ENCODE measurements at regions of chr9 and their contacts with region 1.

Region 1: DNA sequence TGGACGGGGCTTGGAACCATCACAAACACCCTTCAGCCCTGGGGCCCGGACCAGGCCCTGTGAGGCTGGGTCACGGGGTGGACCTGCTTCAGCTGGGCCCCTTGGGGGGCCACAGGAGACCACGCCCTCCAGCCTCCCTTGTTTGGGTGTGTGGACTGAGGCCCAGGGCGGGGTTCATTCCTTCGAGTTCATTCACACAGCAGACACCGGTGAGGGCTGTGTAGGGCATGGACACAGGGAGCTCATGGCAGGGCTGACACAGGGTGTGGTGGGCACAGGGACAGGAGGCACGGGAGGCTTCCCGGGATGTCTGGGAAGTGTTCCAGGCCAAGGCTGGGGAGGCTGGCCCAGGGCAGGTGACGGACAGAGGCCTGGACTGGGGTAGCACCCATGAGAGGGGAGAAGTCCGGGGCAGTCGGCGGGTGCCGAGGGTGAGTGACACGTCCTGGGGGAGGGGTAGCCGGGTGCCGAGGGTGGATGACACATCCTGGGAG is 8.9 kb downstream of the DNLZ start:
- DNase-seq: peak; percentile 39
- H3K4me3 ChIP-seq: no peak overlapping the region
- H3K27ac ChIP-seq: peak overlapping the region; percentile 31 to 45
- H3K4me1 ChIP-seq: peaks cover 28% of the 10 kb centered on the region
- H3K27me3 ChIP-seq: no peaks in the 10 kb centered on the region
- CTCF ChIP-seq: no peak
- POLR2A ChIP-seq: no peak

Region 2: DNA sequence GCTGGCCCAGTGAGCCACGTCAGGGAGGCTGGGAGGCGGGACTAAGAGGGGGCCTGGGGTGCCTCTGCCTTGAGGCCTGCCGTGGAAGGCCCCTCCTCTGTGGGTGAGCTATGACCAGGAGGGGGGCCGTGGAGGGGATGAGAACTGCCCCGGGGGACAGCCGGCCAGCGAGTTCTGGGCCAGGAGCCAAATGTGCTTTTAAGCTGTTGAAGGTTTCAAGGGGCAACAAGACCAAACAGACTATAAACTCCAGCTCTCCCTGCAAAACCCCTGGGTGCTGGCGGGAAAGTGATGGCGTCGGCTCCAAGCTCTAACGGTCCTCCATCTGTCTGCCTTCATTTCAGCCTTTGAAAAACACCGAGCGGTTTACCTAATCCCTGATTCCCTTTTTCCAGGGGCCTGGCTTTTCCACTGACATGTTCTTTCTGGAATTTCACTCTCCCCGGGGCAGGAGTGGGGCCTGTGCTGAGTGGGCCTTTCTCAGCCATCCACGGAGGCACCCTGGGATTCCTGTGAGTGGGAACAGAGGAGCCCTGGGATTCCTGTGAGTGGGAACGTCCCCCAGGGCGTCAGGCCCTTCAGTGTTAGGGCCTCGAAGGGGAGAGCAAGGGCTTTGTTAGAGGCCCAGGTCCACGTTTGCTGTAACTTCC is 1647.5 kb before region 1 on chr9:
- intact Hi-C with region 1: loop called (anchors 10 kb)
- DNase-seq: peak; percentile 71
- H3K4me3 ChIP-seq: no peak overlapping the region
- H3K27ac ChIP-seq: peak overlapping the region in 1 of 2 donors; percentile 41
- H3K4me1 ChIP-seq: peaks cover 18% of the 10 kb centered on the region
- H3K27me3 ChIP-seq: no peaks in the 10 kb centered on the region
- CTCF ChIP-seq: no peak
- POLR2A ChIP-seq: no peak